WTC11 (cell line): ENCODE measurements at regions of chrX and their contacts with region 1.

Region 1: GRCh38 chrX:43958529-43958928 is 14.7 kb downstream of the NDP start:
- DNase-seq: no peak
- ATAC-seq: peak; percentile 86
- H3K4me3 Mint-ChIP-seq: no peak overlapping the region
- H3K27ac Mint-ChIP-seq: no peak overlapping the region
- H3K4me1 Mint-ChIP-seq: peaks cover 13% of the 10 kb centered on the region
- H3K27me3 Mint-ChIP-seq: no peaks in the 10 kb centered on the region
- CTCF ChIP-seq: no peak

Region 2: GRCh38 chrX:43785930-43786591 is 172.5 kb before region 1 on chrX:
- CTCF ChIA-PET with region 1: no interaction called
- POLR2A ChIA-PET with region 1: no interaction called
- DNase-seq: no peak
- ATAC-seq: no peak
- H3K4me3 Mint-ChIP-seq: no peak overlapping the region
- H3K27ac Mint-ChIP-seq: no peak overlapping the region
- H3K4me1 Mint-ChIP-seq: no peaks in the 10 kb centered on the region
- H3K27me3 Mint-ChIP-seq: no peaks in the 10 kb centered on the region
- CTCF ChIP-seq: no peak

Region 3: GRCh38 chrX:43813898-43814297 is 144.6 kb before region 1 on chrX:
- CTCF ChIA-PET with region 1: interaction called, 11 read pairs
- POLR2A ChIA-PET with region 1: no interaction called
- DNase-seq: peak; percentile 36
- ATAC-seq: peak; percentile 72; the same call in 1 of the 2 replicates
- H3K4me3 Mint-ChIP-seq: no peak overlapping the region
- H3K27ac Mint-ChIP-seq: no peak overlapping the region
- H3K4me1 Mint-ChIP-seq: no peaks in the 10 kb centered on the region
- H3K27me3 Mint-ChIP-seq: no peaks in the 10 kb centered on the region
- CTCF ChIP-seq: no peak

Region 4: DNA sequence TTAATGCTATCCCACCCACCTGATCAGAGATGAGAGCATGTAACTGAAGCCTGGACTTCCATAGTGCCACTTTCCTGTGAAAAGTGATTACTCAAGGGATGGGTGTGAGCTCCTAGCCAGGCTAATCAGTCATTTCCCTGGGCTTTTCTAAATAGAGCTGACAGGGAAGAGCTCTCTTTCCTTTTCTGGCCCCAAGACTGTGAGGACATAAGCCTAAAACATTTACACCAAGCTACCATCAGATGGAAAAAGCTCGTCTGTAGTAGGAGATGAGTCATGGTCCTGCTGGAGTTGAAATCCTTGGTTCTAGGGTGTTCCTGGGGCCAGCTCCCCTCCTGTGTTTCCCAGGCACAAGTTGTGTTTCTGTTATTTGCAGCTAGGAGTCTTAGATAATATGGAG is 67.0 kb after region 1 on chrX:
- CTCF ChIA-PET with region 1: interaction called, 12 read pairs
- POLR2A ChIA-PET with region 1: no interaction called
- DNase-seq: no peak
- ATAC-seq: no peak
- H3K4me3 Mint-ChIP-seq: no peak overlapping the region
- H3K27ac Mint-ChIP-seq: no peak overlapping the region
- H3K4me1 Mint-ChIP-seq: peaks cover 15% of the 10 kb centered on the region
- H3K27me3 Mint-ChIP-seq: no peaks in the 10 kb centered on the region
- CTCF ChIP-seq: no peak

Region 5: GRCh38 chrX:44032479-44032878 is 74.0 kb after region 1 on chrX:
- CTCF ChIA-PET with region 1: interaction called, 10 read pairs
- POLR2A ChIA-PET with region 1: no interaction called
- DNase-seq: no peak
- ATAC-seq: no peak
- H3K4me3 Mint-ChIP-seq: no peak overlapping the region
- H3K27ac Mint-ChIP-seq: no peak overlapping the region
- H3K4me1 Mint-ChIP-seq: peaks cover 38% of the 10 kb centered on the region
- H3K27me3 Mint-ChIP-seq: no peaks in the 10 kb centered on the region
- CTCF ChIP-seq: no peak

Region 6: GRCh38 chrX:44203791-44204190 is 245.3 kb after region 1 on chrX:
- CTCF ChIA-PET with region 1: interaction called, 10 read pairs
- POLR2A ChIA-PET with region 1: no interaction called
- DNase-seq: no peak
- ATAC-seq: peak; percentile 80
- H3K4me3 Mint-ChIP-seq: no peak overlapping the region
- H3K27ac Mint-ChIP-seq: no peak overlapping the region
- H3K4me1 Mint-ChIP-seq: peaks cover 10% of the 10 kb centered on the region
- H3K27me3 Mint-ChIP-seq: peaks cover 2% of the 10 kb centered on the region; the same call in 1 of the 2 replicates
- CTCF ChIP-seq: no peak

Region 7: GRCh38 chrX:44238206-44238605 is 279.7 kb after region 1 on chrX:
- CTCF ChIA-PET with region 1: interaction called, 43 read pairs
- POLR2A ChIA-PET with region 1: no interaction called
- DNase-seq: no peak
- ATAC-seq: peak; percentile 47; the same call in 1 of the 2 replicates
- H3K4me3 Mint-ChIP-seq: no peak overlapping the region
- H3K27ac Mint-ChIP-seq: no peak overlapping the region
- H3K4me1 Mint-ChIP-seq: peaks cover 25% of the 10 kb centered on the region
- H3K27me3 Mint-ChIP-seq: no peaks in the 10 kb centered on the region
- CTCF ChIP-seq: no peak

Region 8: GRCh38 chrX:44244008-44244407 is 285.5 kb after region 1 on chrX:
- CTCF ChIA-PET with region 1: interaction called, 43 read pairs
- POLR2A ChIA-PET with region 1: no interaction called
- DNase-seq: no peak
- ATAC-seq: no peak
- H3K4me3 Mint-ChIP-seq: no peak overlapping the region
- H3K27ac Mint-ChIP-seq: no peak overlapping the region
- H3K4me1 Mint-ChIP-seq: peaks cover 42% of the 10 kb centered on the region
- H3K27me3 Mint-ChIP-seq: no peaks in the 10 kb centered on the region
- CTCF ChIP-seq: no peak